ENCODE measurements at regions of chr2 and their contacts with region 1.

Region 1: DNA sequence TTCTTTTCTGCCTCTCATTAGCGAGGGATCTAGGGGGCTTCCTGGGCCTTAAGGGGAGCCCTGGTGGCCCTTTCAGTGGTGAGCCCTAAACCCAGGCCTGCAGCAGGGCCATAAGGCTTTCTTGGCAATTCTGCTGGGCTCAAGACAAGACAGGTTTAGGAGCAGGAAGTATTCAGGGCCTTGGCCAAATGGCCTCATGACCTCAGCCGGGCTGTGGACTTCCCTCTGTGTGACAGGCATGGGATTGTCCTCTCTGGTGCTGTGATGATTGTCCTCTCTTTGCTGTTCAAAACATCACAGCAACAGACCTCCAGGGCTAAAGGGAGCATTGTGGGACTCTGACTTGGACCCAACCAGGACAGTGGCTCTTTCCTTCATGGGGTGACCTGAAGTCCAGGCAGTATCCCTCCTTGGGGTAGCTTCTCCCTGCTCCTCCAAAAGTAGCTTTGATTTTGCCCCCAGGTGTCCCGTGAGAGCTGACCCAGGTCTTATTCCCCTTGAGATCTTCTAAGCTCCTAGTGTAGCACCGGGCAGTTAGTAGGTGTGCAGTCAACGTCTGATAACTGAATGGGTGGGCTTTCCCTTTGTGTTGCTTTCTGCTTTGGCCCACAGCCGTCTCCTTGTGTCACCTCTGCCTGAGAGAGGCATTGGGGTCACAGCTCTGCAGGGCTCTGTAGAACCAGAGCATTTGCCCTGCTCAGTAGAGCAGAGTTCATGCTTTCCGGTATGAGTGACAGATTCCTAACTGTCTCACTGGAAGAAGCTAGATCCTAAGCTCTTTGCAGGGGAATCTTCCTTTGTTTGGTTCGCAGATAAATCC is 14.7 kb downstream of the FOSL2 start:
- DNase-seq: no peak
- ATAC-seq: no peak
- H3K4me3 ChIP-seq: no peak overlapping the region
- H3K27ac ChIP-seq: no peak overlapping the region
- H3K4me1 ChIP-seq: no peaks in the 10 kb centered on the region
- H3K27me3 ChIP-seq: no peaks in the 10 kb centered on the region
- CTCF ChIP-seq: no peak

Region 2: DNA sequence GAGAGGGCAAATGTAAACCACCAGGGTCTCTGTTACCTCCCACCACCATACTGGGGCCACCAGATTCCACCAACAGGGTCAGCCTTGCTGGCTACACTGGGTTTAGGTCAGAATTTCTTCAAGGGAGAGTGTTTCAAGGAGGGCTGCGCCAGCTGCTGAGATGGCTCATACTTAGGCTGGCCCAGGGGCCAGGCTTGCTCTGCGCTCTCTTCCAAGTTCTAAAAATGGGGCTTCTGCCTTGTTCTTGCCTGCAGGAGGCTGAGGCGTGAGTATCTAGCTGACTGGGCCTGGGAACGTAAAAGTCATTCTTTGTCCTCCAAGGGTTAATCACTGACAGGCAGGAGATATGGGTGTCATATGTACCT is 607.7 kb before region 1 on chr2:
- CTCF ChIA-PET with region 1: no interaction called
- POLR2A ChIA-PET with region 1: interaction called, 15 read pairs
- in situ Hi-C with region 1: no loop called
- intact Hi-C with region 1: no loop called
- DNase-seq: no peak
- ATAC-seq: peak; percentile 56
- H3K4me3 ChIP-seq: no peak overlapping the region
- H3K27ac ChIP-seq: peak overlapping the region; percentile 0
- H3K4me1 ChIP-seq: peaks cover 5% of the 10 kb centered on the region
- H3K27me3 ChIP-seq: no peaks in the 10 kb centered on the region
- CTCF ChIP-seq: no peak

Region 3: GRCh38 chr2:29042561-29043075 is 635.3 kb after region 1 on chr2:
- CTCF ChIA-PET with region 1: no interaction called
- POLR2A ChIA-PET with region 1: no interaction called
- in situ Hi-C with region 1: no loop called
- intact Hi-C with region 1: no loop called
- DNase-seq: no peak
- ATAC-seq: peak; percentile 71
- H3K4me3 ChIP-seq: no peak overlapping the region
- H3K27ac ChIP-seq: no peak overlapping the region
- H3K4me1 ChIP-seq: no peaks in the 10 kb centered on the region
- H3K27me3 ChIP-seq: no peaks in the 10 kb centered on the region
- CTCF ChIP-seq: no peak